PC-9 (cell line): ENCODE measurements at regions of chr22 and their contacts with region 1.

Region 1: GRCh38 chr22:30326706-30327362 is at the start of gene TBC1D10A:
- DNase-seq: peak; percentile 90 to 94
- H3K4me3 ChIP-seq: peak within 1 kb of the TSS; percentile 97
- H3K27ac ChIP-seq: peak within 1 kb of the TSS; percentile 53
- H3K4me1 ChIP-seq: peaks cover 34% of the 10 kb centered on the region
- H3K27me3 ChIP-seq: no peaks in the 10 kb centered on the region
- CTCF ChIP-seq: no peak
- total RNA-seq, gene TBC1D10A: 24.3 and 26.2 TPM in 2 replicates

Region 2: DNA sequence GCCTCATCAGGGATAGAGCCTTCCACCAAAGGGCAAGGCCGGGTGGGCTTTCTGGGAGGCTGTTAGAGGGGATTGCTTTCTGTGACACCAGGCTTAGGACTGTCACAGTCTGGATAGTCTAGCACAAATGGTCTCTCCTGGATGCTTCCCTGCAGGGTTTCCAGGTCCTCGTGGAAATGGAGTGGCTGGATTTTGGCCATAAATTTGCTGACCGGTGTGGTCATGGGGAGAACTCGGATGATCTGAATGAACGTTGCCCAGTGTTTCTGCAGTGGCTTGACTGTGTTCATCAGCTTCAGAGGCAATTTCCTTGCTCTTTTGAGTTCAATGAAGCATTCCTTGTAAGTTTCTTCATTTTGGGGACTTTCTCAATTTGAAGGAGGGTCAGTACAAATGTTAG is 313.6 kb before region 1 on chr22:
- CTCF ChIA-PET with region 1: no interaction called
- POLR2A ChIA-PET with region 1: interaction called, 20 read pairs
- intact Hi-C with region 1: no loop called
- DNase-seq: no peak
- H3K4me3 ChIP-seq: no peak overlapping the region
- H3K27ac ChIP-seq: no peak overlapping the region
- H3K4me1 ChIP-seq: no peaks in the 10 kb centered on the region
- H3K27me3 ChIP-seq: no peaks in the 10 kb centered on the region
- CTCF ChIP-seq: no peak

Region 3: GRCh38 chr22:30159561-30160353 is 167.1 kb before region 1 on chr22:
- CTCF ChIA-PET with region 1: no interaction called
- POLR2A ChIA-PET with region 1: no interaction called
- intact Hi-C with region 1: no loop called
- DNase-seq: peak; percentile 37 to 75
- H3K4me3 ChIP-seq: no peak overlapping the region
- H3K27ac ChIP-seq: peak overlapping the region; percentile 28; the same call in 1 of the 2 replicates
- H3K4me1 ChIP-seq: peaks cover 16% of the 10 kb centered on the region
- H3K27me3 ChIP-seq: no peaks in the 10 kb centered on the region
- CTCF ChIP-seq: no peak

Region 4: DNA sequence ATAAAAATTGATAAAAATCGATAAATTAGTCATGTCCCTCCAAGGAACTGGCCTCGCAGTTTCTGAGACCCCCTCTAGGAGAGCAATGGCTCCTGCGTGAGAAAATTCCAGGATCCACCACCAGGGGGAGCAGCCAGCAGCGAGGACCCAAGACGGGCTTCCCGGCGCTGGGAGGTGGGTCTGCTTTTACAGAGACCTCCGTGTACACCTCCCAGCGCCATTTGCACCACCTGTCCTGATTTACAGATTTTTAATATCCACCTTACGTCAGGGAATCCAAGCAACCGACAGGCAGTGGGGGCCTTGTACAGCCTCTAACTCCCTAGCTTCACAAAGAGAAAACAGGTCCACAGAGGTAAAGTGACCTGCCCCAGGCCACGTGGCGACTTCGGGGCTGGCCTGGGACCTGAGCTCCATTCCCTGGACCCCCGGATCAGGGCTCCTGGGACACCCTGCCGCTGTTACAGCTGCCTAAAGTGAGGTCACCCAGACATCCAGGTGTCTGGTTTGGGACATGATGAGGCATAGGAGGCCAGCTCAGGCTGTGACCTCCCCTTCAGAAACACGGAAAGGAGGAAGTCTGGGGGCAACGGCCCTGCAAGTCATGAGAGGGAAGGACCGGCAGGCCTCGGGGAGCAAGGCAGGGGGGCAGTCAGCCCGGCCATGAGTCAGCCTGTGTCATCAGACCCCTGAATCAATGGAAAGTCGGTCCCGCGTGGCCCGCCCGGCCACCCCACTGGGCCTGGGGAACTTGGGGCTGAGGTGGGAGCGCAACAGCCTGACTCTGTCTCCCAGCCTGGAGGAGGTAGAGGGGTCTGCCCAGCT is 63.7 kb before region 1 on chr22:
- CTCF ChIA-PET with region 1: no interaction called
- POLR2A ChIA-PET with region 1: no interaction called
- intact Hi-C with region 1: loop called (anchors 1 kb)
- DNase-seq: peak in 1 of 2 experiments; percentile 64
- H3K4me3 ChIP-seq: peak overlapping the region; percentile 49; the same call in 1 of the 2 replicates
- H3K27ac ChIP-seq: no peak overlapping the region
- H3K4me1 ChIP-seq: peaks cover 51% of the 10 kb centered on the region
- H3K27me3 ChIP-seq: no peaks in the 10 kb centered on the region
- CTCF ChIP-seq: peak; percentile 100

Region 5: GRCh38 chr22:30301995-30302809 is 24.6 kb before region 1 on chr22:
- CTCF ChIA-PET with region 1: interaction called, 8 read pairs
- POLR2A ChIA-PET with region 1: interaction called, 13 read pairs
- intact Hi-C with region 1: loop called (anchors 2 kb)
- DNase-seq: peak; percentile 82 to 95
- H3K4me3 ChIP-seq: no peak overlapping the region; the same call in 1 of the 2 replicates
- H3K27ac ChIP-seq: peak overlapping the region; percentile 95
- H3K4me1 ChIP-seq: peaks cover 97% of the 10 kb centered on the region
- H3K27me3 ChIP-seq: no peaks in the 10 kb centered on the region
- CTCF ChIP-seq: no peak

Region 6: GRCh38 chr22:30340911-30341685 is 14.3 kb after region 1 on chr22:
- CTCF ChIA-PET with region 1: interaction called, 5 read pairs
- POLR2A ChIA-PET with region 1: no interaction called
- intact Hi-C with region 1: loop called (anchors 1 kb)
- DNase-seq: no peak
- H3K4me3 ChIP-seq: no peak overlapping the region
- H3K27ac ChIP-seq: no peak overlapping the region
- H3K4me1 ChIP-seq: no peaks in the 10 kb centered on the region
- H3K27me3 ChIP-seq: no peaks in the 10 kb centered on the region
- CTCF ChIP-seq: no peak

Region 7: DNA sequence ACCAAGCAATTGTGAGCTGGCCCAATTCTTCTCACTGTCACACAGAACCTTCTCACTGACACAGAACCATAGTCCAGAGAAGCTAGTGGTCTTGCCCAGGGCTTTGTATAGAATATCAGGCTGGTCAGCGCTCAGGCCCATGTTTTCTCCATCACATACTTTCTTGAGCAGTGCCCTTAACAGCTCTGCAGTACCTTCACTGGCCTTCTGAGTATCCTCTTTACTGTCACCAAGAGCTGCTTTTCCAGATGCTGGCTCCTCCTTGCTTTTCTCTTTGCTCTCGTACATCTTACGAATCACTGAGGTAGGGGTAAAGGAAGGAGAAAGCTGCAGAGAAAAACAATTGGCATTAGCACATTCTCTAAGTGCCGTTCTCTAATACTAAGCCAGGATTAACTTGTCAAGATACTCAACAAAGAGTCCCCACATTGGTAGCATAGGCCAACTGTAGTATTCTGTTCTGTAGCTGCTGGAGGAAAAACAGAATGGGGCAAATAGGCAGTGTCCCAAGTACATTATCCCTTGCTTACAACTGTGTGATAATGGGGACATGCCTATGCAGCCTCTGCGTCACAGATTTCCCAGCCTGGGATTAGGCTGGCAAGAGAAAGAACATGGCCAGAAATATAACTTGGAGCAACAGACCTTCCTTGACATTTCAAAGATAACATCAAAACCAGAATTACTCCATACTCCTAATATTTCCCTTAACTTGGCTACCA is 1116.1 kb after region 1 on chr22:
- CTCF ChIA-PET with region 1: interaction called, 11 read pairs
- POLR2A ChIA-PET with region 1: no interaction called
- intact Hi-C with region 1: no loop called
- DNase-seq: no peak
- H3K4me3 ChIP-seq: no peak overlapping the region
- H3K27ac ChIP-seq: no peak overlapping the region
- H3K4me1 ChIP-seq: no peaks in the 10 kb centered on the region
- H3K27me3 ChIP-seq: no peaks in the 10 kb centered on the region
- CTCF ChIP-seq: no peak